Activated CD4-positive, alpha-beta memory T cell treated with anti-CD3 and anti-CD28 coated beads, Interleukin-2, amount 10 ng/mL, durations not matched to agents 7 days and 5 days (primary cell): ENCODE measurements at regions of chr17 and their contacts with region 1.

Region 1: GRCh38 chr17:58352014-58352842 is at the start of gene SUPT4H1:
- DNase-seq: peak; percentile 93
- H3K4me3 Mint-ChIP-seq: peak within 1 kb of the TSS; percentile 100
- H3K27ac Mint-ChIP-seq: peak within 1 kb of the TSS; percentile 97
- H3K4me1 Mint-ChIP-seq: peaks cover 53% of the 10 kb centered on the region
- H3K27me3 Mint-ChIP-seq: no peaks in the 10 kb centered on the region
- total RNA-seq, gene SUPT4H1: 85.8 to 91.0 TPM

Region 2: DNA sequence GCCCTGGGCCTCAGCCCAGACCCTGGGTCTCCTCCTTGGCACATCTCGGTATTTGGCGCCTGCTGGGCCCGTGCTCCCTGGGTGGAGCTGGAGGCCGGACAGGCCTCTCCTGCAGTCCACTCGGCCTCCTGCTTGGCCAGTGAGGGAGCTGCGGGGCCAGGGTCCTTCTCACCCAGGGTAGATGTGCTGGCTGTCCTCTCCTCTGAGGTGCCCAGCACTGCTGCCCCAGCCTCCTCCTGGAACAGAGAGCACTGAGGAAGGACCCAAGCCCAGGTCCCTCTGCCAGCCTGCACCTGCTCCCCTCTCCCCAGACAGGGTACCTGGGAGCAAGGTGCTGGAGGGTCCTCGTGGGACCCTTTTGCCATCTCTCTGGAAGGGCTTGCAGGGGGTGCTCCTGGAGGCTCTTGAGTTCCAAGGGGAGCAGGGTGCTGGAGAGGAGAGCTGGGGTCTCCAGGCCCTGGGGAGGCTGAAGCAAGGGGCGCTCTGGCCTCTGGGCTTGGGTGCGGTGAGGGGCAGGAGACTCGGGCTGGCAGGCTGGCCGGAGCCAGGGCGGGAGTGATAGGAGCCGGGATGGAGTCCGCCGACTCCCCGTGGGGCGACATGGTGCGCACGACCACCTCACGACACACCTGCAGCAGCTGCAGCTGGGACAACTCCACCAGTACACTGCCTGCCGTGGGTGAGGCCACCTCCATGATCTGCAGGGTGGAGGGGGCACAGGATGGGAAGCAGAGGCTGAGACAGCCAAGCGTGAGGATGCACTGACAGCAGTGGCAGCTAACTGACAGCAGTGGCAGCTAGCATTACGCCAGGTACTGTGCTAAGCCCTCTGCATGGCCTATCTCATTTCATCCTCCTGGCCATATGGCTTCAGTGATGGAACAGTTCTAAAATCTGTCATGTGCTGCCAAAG is 41.5 kb before region 1 on chr17:
- CTCF ChIA-PET with region 1: interaction called, 13 read pairs
- POLR2A ChIA-PET with region 1: interaction called, 1,460 read pairs
- DNase-seq: no peak
- H3K4me3 Mint-ChIP-seq: no peak overlapping the region
- H3K27ac Mint-ChIP-seq: no peak overlapping the region
- H3K4me1 Mint-ChIP-seq: no peaks in the 10 kb centered on the region
- H3K27me3 Mint-ChIP-seq: no peaks in the 10 kb centered on the region

Region 3: DNA sequence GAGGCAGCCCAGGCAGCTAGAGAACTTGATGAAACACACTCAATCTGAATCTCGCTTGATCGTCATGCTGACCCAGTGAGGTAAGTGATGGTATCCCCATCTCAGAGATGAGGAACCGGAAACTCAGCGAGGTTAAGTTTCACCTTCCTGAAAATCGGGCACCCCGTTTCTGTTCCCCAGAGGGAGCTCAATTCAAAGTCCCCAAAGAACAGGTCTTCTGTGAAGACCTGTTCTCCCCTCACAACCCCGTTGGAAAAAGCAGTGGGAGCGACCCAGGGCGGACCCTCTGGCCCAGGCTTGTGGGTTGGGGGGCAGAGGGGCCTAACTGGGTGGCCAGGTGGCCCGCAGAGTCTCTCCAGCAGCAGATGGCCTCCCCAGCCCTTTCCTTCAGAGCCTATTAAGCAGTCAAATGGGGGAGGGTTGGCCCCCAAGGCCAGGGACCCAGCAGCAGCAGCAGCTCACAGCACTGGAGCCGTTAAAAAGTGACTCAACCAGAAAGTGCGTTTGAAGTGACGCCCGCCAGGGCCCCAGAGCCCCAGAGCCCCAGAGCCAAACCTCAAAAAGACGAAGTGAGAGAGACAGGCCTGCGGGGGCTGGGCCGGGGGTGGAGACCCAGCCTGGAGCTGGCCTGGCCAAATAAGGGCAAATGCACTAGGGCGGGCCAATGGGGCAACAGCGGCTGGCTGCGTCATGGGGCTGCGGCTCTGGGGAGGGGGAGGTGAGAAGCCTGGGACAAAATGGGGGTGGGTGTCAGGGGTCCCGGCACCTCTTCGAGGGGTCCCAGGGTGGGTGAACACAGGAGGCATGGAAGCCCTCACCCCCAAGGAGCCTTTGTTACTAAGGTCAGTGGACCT is 14.4 kb before region 1 on chr17:
- CTCF ChIA-PET with region 1: interaction called, 51 read pairs
- POLR2A ChIA-PET with region 1: interaction called, 1,343 read pairs
- DNase-seq: peak; percentile 96
- H3K4me3 Mint-ChIP-seq: peak overlapping the region; percentile 98
- H3K27ac Mint-ChIP-seq: peak overlapping the region; percentile 100
- H3K4me1 Mint-ChIP-seq: peaks cover 52% of the 10 kb centered on the region
- H3K27me3 Mint-ChIP-seq: no peaks in the 10 kb centered on the region

Region 4: GRCh38 chr17:58369214-58370031 is 17.2 kb after region 1 on chr17:
- CTCF ChIA-PET with region 1: interaction called, 5 read pairs
- POLR2A ChIA-PET with region 1: interaction called, 62 read pairs
- DNase-seq: no peak
- H3K4me3 Mint-ChIP-seq: no peak overlapping the region
- H3K27ac Mint-ChIP-seq: no peak overlapping the region
- H3K4me1 Mint-ChIP-seq: peaks cover 8% of the 10 kb centered on the region
- H3K27me3 Mint-ChIP-seq: no peaks in the 10 kb centered on the region

Region 5: GRCh38 chr17:58417300-58418092 is 65.3 kb after region 1 on chr17 and contains the start of gene RNF43:
- CTCF ChIA-PET with region 1: interaction called, 38 read pairs
- POLR2A ChIA-PET with region 1: interaction called, 24 read pairs
- DNase-seq: peak; percentile 86
- H3K4me3 Mint-ChIP-seq: peak within 1 kb of the TSS; percentile 8
- H3K27ac Mint-ChIP-seq: peak within 1 kb of the TSS; percentile 10
- H3K4me1 Mint-ChIP-seq: peaks cover 31% of the 10 kb centered on the region
- H3K27me3 Mint-ChIP-seq: no peaks in the 10 kb centered on the region
- total RNA-seq, gene RNF43: not detected